Activated B cell treated with CpG ODN at 0.5 μM for 24 hours (primary cell): ENCODE measurements at regions of chr7 and their contacts with region 1.

Region 1: GRCh38 chr7:24665564-24666294 is 91.5 kb downstream of the GSDME start:
- DNase-seq: no peak
- ATAC-seq: no peak
- H3K4me3 Mint-ChIP-seq: no peak overlapping the region
- H3K27ac Mint-ChIP-seq: no peak overlapping the region
- H3K4me1 Mint-ChIP-seq: no peaks in the 10 kb centered on the region
- H3K27me3 Mint-ChIP-seq: no peaks in the 10 kb centered on the region
- CTCF ChIP-seq: peak; percentile 89

Region 2: DNA sequence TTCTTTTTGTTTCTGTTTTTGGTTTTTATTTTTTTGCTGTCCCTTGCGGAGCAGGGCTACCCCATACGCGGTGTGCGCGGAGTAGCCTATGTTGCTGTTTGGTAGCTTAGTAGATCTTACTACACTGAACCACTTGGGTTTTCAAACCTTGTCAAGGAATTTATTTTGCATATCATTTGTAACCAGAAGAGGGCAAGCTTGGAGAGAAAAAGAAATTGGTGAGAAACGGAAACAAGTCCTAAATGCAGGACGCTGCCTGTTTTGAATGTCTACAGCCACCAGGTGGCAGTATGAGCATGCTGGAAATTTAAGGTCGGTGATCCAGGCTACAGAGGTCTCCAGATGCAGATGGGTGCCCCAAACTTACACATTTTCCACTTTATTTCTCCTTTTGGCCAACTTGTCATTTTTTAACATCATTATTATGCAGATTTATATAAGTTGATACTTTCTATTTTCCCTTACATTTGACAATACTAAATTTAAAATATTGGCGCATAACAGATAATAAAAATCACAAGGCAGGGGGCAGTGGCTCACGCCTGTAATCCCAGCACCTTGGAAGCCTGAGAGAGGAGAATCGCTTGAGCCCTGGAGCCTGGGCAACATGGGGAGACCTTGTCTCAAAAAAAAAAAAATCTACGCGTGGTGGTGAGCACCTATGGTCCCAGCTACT is 1118.7 kb before region 1 on chr7:
- CTCF ChIA-PET with region 1: interaction called, 6 read pairs
- POLR2A ChIA-PET with region 1: no interaction called
- intact Hi-C with region 1: loop called (anchors 2 kb)
- DNase-seq: peak; percentile 40
- ATAC-seq: peak; percentile 91
- H3K4me3 Mint-ChIP-seq: no peak overlapping the region
- H3K27ac Mint-ChIP-seq: no peak overlapping the region
- H3K4me1 Mint-ChIP-seq: peaks cover 18% of the 10 kb centered on the region
- H3K27me3 Mint-ChIP-seq: no peaks in the 10 kb centered on the region
- CTCF ChIP-seq: no peak

Region 3: DNA sequence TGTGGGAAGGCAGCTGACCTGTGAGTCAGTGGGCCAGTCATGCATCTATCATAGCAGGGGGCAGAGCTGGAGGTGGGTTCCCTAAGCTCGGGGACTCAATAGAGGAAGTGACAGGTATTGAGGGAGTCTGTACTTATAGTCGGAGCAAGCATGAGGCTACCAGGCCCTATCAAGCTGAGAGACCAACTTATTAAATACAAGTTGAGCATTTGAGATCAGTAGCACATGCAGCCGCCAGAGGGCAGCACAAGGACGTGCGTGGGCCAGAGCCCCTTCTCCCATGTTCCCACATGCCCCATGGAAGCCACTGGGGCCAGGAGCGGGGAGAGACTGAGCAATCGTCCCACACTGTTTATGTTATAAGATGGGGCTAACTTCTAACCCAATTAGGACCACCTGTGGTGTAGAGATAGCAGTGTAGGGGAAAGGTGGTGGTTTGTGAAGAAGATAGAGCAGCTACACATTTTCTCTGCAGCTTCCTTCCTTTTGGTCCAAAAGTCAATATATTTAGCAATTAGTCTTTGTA is 968.8 kb before region 1 on chr7:
- CTCF ChIA-PET with region 1: interaction called, 3 read pairs
- POLR2A ChIA-PET with region 1: no interaction called
- intact Hi-C with region 1: loop called (anchors 1 kb)
- DNase-seq: peak; percentile 38
- ATAC-seq: peak; percentile 60
- H3K4me3 Mint-ChIP-seq: no peak overlapping the region
- H3K27ac Mint-ChIP-seq: no peak overlapping the region
- H3K4me1 Mint-ChIP-seq: no peaks in the 10 kb centered on the region
- H3K27me3 Mint-ChIP-seq: no peaks in the 10 kb centered on the region
- CTCF ChIP-seq: no peak

Region 4: GRCh38 chr7:23712368-23713284 is 953.1 kb before region 1 on chr7:
- CTCF ChIA-PET with region 1: no interaction called
- POLR2A ChIA-PET with region 1: no interaction called
- intact Hi-C with region 1: loop called (anchors 5 kb)
- DNase-seq: no peak
- ATAC-seq: no peak
- H3K4me3 Mint-ChIP-seq: no peak overlapping the region
- H3K27ac Mint-ChIP-seq: no peak overlapping the region
- H3K4me1 Mint-ChIP-seq: no peaks in the 10 kb centered on the region
- H3K27me3 Mint-ChIP-seq: no peaks in the 10 kb centered on the region
- CTCF ChIP-seq: no peak

Region 5: GRCh38 chr7:23863209-23863798 is 802.4 kb before region 1 on chr7:
- CTCF ChIA-PET with region 1: interaction called, 4 read pairs
- POLR2A ChIA-PET with region 1: no interaction called
- intact Hi-C with region 1: loop called (anchors 1 kb)
- DNase-seq: no peak
- ATAC-seq: no peak
- H3K4me3 Mint-ChIP-seq: no peak overlapping the region
- H3K27ac Mint-ChIP-seq: no peak overlapping the region
- H3K4me1 Mint-ChIP-seq: no peaks in the 10 kb centered on the region
- H3K27me3 Mint-ChIP-seq: peaks cover 2% of the 10 kb centered on the region
- CTCF ChIP-seq: no peak

Region 6: DNA sequence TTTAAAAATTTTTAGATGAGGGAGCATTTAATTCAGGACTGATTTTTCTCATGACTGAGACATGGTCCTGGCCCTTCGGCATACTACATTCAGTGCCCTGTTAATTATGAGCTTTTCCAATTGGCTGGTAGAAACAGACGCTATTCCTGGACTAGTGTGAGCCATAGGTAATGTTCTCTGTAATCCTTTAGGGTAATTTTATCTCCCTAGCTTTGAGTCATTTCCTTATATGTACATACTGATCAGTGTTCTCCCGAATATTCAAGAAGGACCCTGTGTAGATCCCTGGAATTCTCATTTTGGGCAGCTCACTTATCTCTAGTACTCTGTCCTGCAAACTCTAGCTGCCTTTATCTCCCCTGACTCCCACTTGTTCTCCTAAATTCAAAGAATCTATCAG is 474.4 kb before region 1 on chr7:
- CTCF ChIA-PET with region 1: no interaction called
- POLR2A ChIA-PET with region 1: no interaction called
- intact Hi-C with region 1: no loop called
- DNase-seq: no peak
- ATAC-seq: no peak
- H3K4me3 Mint-ChIP-seq: no peak overlapping the region
- H3K27ac Mint-ChIP-seq: no peak overlapping the region
- H3K4me1 Mint-ChIP-seq: no peaks in the 10 kb centered on the region
- H3K27me3 Mint-ChIP-seq: no peaks in the 10 kb centered on the region
- CTCF ChIP-seq: no peak

Region 7: GRCh38 chr7:24279512-24279911 is 386.2 kb before region 1 on chr7:
- CTCF ChIA-PET with region 1: no interaction called
- POLR2A ChIA-PET with region 1: no interaction called
- intact Hi-C with region 1: no loop called
- DNase-seq: no peak
- ATAC-seq: no peak
- H3K4me3 Mint-ChIP-seq: no peak overlapping the region
- H3K27ac Mint-ChIP-seq: no peak overlapping the region
- H3K4me1 Mint-ChIP-seq: peaks cover 11% of the 10 kb centered on the region
- H3K27me3 Mint-ChIP-seq: peaks cover 11% of the 10 kb centered on the region
- CTCF ChIP-seq: no peak

Region 8: DNA sequence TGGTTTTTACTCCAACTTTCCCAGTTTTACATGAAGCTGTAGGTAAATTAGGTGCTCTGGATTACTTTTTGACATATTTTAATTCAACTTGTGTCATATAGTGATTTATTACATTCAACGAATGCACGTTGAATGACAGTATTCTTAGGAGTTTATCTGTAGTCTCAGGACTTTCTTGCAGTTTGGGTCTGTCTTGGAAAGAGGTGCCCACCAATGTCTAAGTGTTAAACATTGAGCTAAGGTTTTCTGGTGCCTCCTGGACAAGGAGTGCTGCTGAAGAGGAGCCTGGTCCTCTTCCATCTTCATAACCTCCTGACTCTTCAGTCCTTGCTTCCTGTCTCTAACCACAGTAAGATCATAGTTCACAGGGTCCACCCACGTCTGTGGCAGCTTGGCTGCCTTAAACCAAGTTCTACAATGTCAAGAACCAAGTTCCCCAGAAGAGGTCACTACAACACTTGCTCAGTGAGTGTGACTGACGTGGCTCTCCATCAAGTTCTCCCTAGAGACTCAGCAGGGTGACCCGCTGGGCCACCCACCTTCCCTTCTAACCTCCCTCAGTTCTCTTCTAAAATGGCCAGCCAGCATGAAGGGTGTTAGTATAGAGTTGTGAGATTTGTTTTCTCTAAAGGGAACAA is 375.6 kb before region 1 on chr7:
- CTCF ChIA-PET with region 1: interaction called, 8 read pairs
- POLR2A ChIA-PET with region 1: no interaction called
- intact Hi-C with region 1: loop called (anchors 1 kb)
- DNase-seq: no peak
- ATAC-seq: peak; percentile 90
- H3K4me3 Mint-ChIP-seq: no peak overlapping the region
- H3K27ac Mint-ChIP-seq: no peak overlapping the region
- H3K4me1 Mint-ChIP-seq: peaks cover 13% of the 10 kb centered on the region
- H3K27me3 Mint-ChIP-seq: peaks cover 34% of the 10 kb centered on the region
- CTCF ChIP-seq: no peak

Region 9: GRCh38 chr7:24401628-24402593 is 263.8 kb before region 1 on chr7:
- CTCF ChIA-PET with region 1: interaction called, 3 read pairs
- POLR2A ChIA-PET with region 1: no interaction called
- intact Hi-C with region 1: loop called (anchors 1 kb)
- DNase-seq: no peak
- ATAC-seq: no peak
- H3K4me3 Mint-ChIP-seq: no peak overlapping the region
- H3K27ac Mint-ChIP-seq: no peak overlapping the region
- H3K4me1 Mint-ChIP-seq: peaks cover 6% of the 10 kb centered on the region
- H3K27me3 Mint-ChIP-seq: peaks cover 6% of the 10 kb centered on the region
- CTCF ChIP-seq: no peak

Region 10: GRCh38 chr7:24732646-24733413 is 67.1 kb after region 1 on chr7:
- CTCF ChIA-PET with region 1: no interaction called
- POLR2A ChIA-PET with region 1: no interaction called
- intact Hi-C with region 1: no loop called
- DNase-seq: no peak
- ATAC-seq: no peak
- H3K4me3 Mint-ChIP-seq: no peak overlapping the region
- H3K27ac Mint-ChIP-seq: no peak overlapping the region
- H3K4me1 Mint-ChIP-seq: peaks cover 6% of the 10 kb centered on the region
- H3K27me3 Mint-ChIP-seq: peaks cover 6% of the 10 kb centered on the region
- CTCF ChIP-seq: no peak

Region 11: GRCh38 chr7:26029911-26030310 is 1364.2 kb after region 1 on chr7:
- CTCF ChIA-PET with region 1: no interaction called
- POLR2A ChIA-PET with region 1: no interaction called
- intact Hi-C with region 1: no loop called
- DNase-seq: no peak
- ATAC-seq: no peak
- H3K4me3 Mint-ChIP-seq: no peak overlapping the region
- H3K27ac Mint-ChIP-seq: no peak overlapping the region
- H3K4me1 Mint-ChIP-seq: no peaks in the 10 kb centered on the region
- H3K27me3 Mint-ChIP-seq: peaks cover 32% of the 10 kb centered on the region
- CTCF ChIP-seq: no peak